Endothelial cell of umbilical vein (primary cell): ENCODE measurements at regions of chr17 and their contacts with region 1.

Region 1: DNA sequence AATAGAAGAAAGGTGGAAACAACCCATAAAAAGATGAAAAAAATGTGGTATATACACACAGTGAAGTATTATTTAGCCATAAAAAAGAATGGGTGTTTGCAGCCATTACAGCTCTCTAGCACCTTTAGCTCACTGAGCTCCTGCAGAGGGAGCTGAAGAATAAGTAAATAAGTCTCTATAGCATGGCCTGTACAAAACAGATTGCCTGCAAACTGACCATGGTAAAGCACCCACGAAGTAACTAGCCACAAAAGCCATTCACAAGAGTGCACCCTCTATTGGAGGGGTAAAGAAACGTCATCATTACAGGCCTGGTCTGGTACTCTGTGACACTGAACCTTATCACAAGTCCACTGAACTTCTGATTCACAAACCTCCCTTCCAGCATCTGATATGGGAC is 76.3 kb downstream of the USP32 start:
- DNase-seq: no peak
- H3K4me3 ChIP-seq: no peak overlapping the region
- H3K27ac ChIP-seq: no peak overlapping the region
- H3K4me1 ChIP-seq: no peaks in the 10 kb centered on the region
- H3K27me3 ChIP-seq: no peaks in the 10 kb centered on the region
- CTCF ChIP-seq: no peak
- POLR2A ChIP-seq: no peak

Region 2: GRCh38 chr17:60327122-60327900 is 11.7 kb after region 1 on chr17:
- CTCF ChIA-PET with region 1: interaction called, 6 read pairs
- POLR2A ChIA-PET with region 1: interaction called, 10 read pairs
- dilution Hi-C with region 1: no loop called
- intact Hi-C with region 1: no loop called
- DNase-seq: no peak
- H3K4me3 ChIP-seq: no peak overlapping the region
- H3K27ac ChIP-seq: no peak overlapping the region
- H3K4me1 ChIP-seq: no peaks in the 10 kb centered on the region
- H3K27me3 ChIP-seq: no peaks in the 10 kb centered on the region
- CTCF ChIP-seq: no peak
- POLR2A ChIP-seq: no peak